ENCODE measurements at regions of chr19 and their contacts with region 1.

Region 1: DNA sequence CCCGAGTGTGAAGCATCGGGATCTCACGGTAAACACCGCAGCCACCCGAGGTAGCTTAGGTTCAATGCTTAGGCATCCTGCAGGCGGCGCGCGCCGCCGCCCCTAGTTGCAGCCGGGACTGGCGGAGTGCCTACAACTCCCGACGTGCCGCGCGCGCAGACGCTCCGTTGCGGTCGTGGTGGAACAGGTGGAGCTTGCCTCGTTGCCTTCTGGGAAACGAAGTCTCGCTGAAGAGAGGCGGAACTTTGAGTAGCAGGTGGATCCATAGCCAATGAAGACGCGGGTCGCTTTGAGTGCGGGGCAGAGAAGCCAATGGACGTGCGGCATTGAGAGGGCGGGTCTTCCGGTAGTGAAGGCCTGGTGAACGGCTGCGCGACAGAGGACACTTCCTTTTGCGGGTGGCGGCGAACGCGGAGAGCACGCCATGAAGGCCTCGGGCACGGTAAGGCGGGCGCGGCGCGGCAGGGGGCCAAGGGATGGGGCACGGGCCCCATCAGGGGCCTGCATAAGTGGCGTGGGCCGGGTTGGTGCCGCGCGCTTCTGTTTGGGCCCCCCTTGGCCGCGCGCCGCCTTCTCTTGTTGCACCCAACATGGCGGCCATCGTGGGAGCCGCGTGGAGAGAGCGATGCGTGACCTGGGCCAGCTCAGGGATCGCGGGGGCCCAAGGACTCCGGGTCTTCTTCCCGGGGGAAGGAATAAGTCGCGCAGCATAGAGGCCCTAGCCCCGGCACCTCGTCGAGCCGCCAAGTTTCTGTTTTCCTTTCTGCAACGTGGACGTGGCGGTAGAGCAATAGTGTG is at the start of gene RPL18A:
- DNase-seq: peak; percentile 99
- ATAC-seq: peak; percentile 91
- H3K4me3 ChIP-seq: peak within 1 kb of the TSS; percentile 91 to 97 (median 96)
- H3K27ac ChIP-seq: peak within 1 kb of the TSS; percentile 82
- H3K4me1 ChIP-seq: peaks cover 18% of the 10 kb centered on the region
- H3K27me3 ChIP-seq: no peaks in the 10 kb centered on the region; a peak in 1 of 5 replicates
- CTCF ChIP-seq: peak; percentile 97
- EP300 ChIP-seq: peak in 1 of 2 experiments; percentile 4; a peak in 1 of 4 replicates
- POLR2A ChIP-seq: peak; percentile 97
- RAD21 ChIP-seq: peak; percentile 31; the same call in 1 of the 2 replicates
- total RNA-seq, gene RPL18A: 1,471 and 1,490 TPM in 2 replicates

Region 2: GRCh38 chr19:17605761-17606745 is 253.7 kb before region 1 on chr19:
- CTCF ChIA-PET with region 1: no interaction called
- POLR2A ChIA-PET with region 1: interaction called, 12 read pairs
- in situ Hi-C with region 1: no loop called
- intact Hi-C with region 1: no loop called
- DNase-seq: peak; percentile 80
- ATAC-seq: peak; percentile 88
- H3K4me3 ChIP-seq: peak overlapping the region; percentile 27 to 68 (median 59); a peak in 5 of 6 replicates
- H3K27ac ChIP-seq: peak overlapping the region; percentile 76
- H3K4me1 ChIP-seq: peaks cover 44% of the 10 kb centered on the region
- H3K27me3 ChIP-seq: peaks cover 3 to 28% of the 10 kb centered on the region in 2 experiments; a peak in 3 of 5 replicates
- CTCF ChIP-seq: peak; percentile 70
- EP300 ChIP-seq: no peak
- POLR2A ChIP-seq: peak; percentile 61 to 84
- RAD21 ChIP-seq: peak; percentile 87

Region 3: DNA sequence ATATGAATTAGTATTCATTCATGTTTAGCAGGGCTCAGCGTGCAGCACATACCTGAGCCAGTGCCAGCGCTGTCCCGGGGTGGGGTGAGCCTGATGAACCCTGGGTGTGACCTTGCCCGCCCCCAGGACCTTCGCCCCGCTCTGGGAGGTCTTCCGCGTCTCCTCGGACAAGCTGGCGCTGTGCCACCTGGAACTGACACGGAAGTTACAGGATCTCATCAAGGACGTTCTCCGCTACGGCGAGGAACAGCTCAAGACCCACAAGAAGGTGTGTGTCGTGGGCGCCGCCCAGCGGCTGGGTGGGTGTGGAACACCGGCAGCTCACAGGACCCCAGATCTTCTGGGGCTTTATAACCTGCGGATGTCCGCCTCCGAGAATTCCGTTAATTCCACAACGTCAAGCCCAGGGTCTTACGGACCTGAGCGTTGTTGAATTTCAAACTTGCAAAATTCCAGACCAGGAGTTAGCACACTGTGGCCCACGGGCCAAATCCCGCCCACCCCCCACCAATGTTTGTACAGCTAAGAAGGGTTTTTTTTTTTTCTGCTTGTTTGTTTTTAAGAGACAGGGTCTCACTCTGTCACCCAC is 93.1 kb before region 1 on chr19:
- CTCF ChIA-PET with region 1: no interaction called
- POLR2A ChIA-PET with region 1: interaction called, 18 read pairs
- in situ Hi-C with region 1: no loop called
- intact Hi-C with region 1: no loop called
- DNase-seq: peak; percentile 89
- ATAC-seq: peak; percentile 83
- H3K4me3 ChIP-seq: peak overlapping the region; percentile 8 to 63 (median 13); a peak in 3 of 6 replicates
- H3K27ac ChIP-seq: peak overlapping the region; percentile 58
- H3K4me1 ChIP-seq: peaks cover 28% of the 10 kb centered on the region
- H3K27me3 ChIP-seq: no peaks in the 10 kb centered on the region
- CTCF ChIP-seq: peak; percentile 98
- EP300 ChIP-seq: peak in 1 of 2 experiments; percentile 22; a peak in 1 of 4 replicates
- POLR2A ChIP-seq: no peak
- RAD21 ChIP-seq: peak; percentile 87

Region 4: DNA sequence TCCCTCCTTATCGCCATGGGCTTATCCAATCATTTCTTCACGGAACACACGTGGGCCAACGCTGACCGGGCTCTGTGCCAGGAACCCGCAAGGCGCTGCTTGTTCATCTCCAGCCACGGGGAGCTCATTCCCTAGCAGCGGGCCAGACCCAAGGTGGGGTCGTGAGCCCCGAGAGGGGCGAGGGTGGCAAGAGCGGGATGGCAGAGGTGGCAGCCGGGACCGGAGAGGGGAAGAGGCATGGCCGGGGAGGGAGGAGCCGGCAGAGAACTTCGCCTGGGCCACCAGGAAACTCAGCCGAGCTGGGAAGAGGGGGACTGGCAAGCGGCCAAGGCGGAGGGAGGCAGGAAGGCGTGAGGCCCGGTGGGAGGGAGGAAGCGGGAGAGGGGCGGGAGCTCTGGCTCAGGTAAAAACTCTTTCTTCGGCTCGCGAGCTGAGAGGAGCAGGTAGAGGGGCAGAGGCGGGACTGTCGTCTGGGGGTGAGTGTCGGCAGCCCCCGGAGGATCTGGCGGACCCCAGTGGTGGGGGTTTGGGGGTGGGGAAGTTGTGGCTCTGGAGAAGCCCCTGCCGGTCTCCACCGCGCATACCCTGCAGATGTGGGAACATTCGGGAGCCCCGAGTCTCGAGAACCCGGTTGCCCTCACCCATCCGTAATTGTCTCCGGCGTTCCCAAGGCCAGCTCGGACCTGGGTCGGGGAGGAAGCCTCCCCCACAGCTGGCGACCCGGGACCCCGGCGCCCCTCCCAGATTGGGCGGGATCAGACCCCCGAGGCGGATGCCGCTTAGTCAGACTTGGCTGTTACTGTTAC is 64.8 kb before region 1 on chr19 and contains the start of gene B3GNT3:
- CTCF ChIA-PET with region 1: no interaction called
- POLR2A ChIA-PET with region 1: interaction called, 24 read pairs
- in situ Hi-C with region 1: no loop called
- intact Hi-C with region 1: loop called (anchors 1 kb)
- DNase-seq: peak; percentile 46
- ATAC-seq: peak; percentile 17
- H3K4me3 ChIP-seq: peak within 1 kb of the TSS; percentile 64 to 79 (median 66)
- H3K27ac ChIP-seq: no peak within 1 kb of the TSS
- H3K4me1 ChIP-seq: peaks cover 55% of the 10 kb centered on the region
- H3K27me3 ChIP-seq: peaks cover 0 to 15% of the 10 kb centered on the region in 2 experiments; a peak in 1 of 5 replicates
- CTCF ChIP-seq: no peak
- EP300 ChIP-seq: no peak
- POLR2A ChIP-seq: no peak; a peak in 1 of 4 replicates
- RAD21 ChIP-seq: no peak
- total RNA-seq, gene B3GNT3: 0.48 and 0.86 TPM in 2 replicates

Region 5: DNA sequence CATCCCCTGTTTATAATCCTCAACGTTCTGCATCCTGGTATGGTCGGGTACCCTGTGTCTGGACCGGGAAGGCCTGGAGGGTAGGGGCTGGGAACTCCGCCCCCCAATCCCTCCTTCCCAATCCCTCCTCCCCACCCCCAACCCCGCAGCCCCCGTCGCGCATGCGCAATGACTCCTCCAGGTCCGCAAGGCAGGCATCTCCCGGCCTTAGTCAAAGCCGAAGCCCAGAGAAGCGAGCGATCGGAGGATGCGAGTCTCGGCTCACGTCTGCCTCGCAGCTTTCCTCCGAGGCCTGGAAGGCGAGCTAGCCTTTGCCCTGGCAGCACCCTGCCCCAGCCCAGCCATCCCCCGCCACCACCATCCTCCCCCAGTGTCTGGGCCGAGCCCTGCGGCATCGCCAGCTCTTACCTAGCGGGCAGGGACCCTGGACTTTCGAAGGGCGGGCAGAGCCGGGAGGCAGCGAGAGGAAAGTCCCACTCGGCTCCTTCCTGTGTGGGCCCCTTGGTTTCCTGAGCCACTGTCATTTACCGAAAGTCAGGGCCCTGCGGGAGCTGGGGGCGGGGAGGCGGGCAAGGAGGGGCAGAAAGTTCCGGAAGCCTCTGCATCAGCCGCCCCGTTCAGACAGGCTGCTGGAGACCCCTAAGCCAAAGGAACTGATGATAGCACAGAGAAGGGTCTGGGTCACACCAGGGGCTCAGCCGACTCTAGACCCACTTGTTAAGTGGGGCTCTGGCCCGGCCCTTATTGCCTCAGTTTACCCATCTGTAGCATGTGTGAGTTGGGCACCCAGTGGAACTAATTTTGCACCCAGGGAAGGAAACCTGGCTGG is 12.0 kb before region 1 on chr19 and contains the start of gene JAK3:
- CTCF ChIA-PET with region 1: no interaction called
- POLR2A ChIA-PET with region 1: interaction called, 49 read pairs
- in situ Hi-C with region 1: no loop called
- intact Hi-C with region 1: no loop called
- DNase-seq: peak; percentile 59
- ATAC-seq: peak; percentile 83
- H3K4me3 ChIP-seq: peak within 1 kb of the TSS; percentile 50 to 64 (median 60)
- H3K27ac ChIP-seq: peak within 1 kb of the TSS; percentile 67
- H3K4me1 ChIP-seq: peaks cover 43% of the 10 kb centered on the region
- H3K27me3 ChIP-seq: no peaks in the 10 kb centered on the region; a peak in 1 of 5 replicates
- CTCF ChIP-seq: peak; percentile 16; the same call in 1 of the 2 replicates
- EP300 ChIP-seq: 0 out of 4 replicates have a peak, but pooled peaks of 1 of the 2 experiments have one; percentile 48
- POLR2A ChIP-seq: peak; percentile 22 to 79; a peak in 3 of 4 replicates
- RAD21 ChIP-seq: no peak
- total RNA-seq, gene JAK3: 2.8 and 3.4 TPM in 2 replicates

Region 6: DNA sequence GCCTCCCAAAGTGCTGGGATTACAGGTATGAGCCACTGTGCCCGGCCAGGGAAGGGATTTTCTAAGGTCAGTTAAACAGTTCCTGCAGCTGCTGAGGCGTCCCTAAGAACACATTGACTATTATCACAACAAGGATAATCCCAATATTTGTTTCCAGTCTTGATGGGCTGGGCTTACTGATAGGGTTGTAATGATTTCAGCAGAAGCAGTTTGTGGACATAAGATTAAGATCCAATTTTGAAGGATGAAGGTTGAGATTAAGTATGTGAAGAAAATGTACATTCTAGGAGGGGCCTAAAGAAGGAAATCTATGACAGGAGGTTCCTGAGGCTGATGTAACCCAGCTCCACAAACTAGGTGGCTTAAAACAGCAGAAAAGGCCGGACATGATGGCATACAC is 62.4 kb after region 1 on chr19:
- CTCF ChIA-PET with region 1: no interaction called
- POLR2A ChIA-PET with region 1: no interaction called
- in situ Hi-C with region 1: no loop called
- intact Hi-C with region 1: no loop called
- DNase-seq: no peak
- ATAC-seq: no peak
- H3K4me3 ChIP-seq: no peak overlapping the region
- H3K27ac ChIP-seq: no peak overlapping the region
- H3K4me1 ChIP-seq: no peaks in the 10 kb centered on the region
- H3K27me3 ChIP-seq: no peaks in the 10 kb centered on the region
- CTCF ChIP-seq: no peak
- EP300 ChIP-seq: no peak
- POLR2A ChIP-seq: no peak
- RAD21 ChIP-seq: no peak

Region 7: GRCh38 chr19:17932485-17933338 is 73.0 kb after region 1 on chr19 and contains the start of gene CCDC124:
- CTCF ChIA-PET with region 1: interaction called, 7 read pairs
- POLR2A ChIA-PET with region 1: interaction called, 43 read pairs
- in situ Hi-C with region 1: no loop called
- intact Hi-C with region 1: loop called (anchors 5 kb)
- DNase-seq: peak; percentile 80
- ATAC-seq: peak; percentile 93
- H3K4me3 ChIP-seq: peak within 1 kb of the TSS; percentile 91 to 97 (median 94)
- H3K27ac ChIP-seq: peak within 1 kb of the TSS; percentile 80
- H3K4me1 ChIP-seq: peaks cover 33% of the 10 kb centered on the region
- H3K27me3 ChIP-seq: peaks cover 0 to 4% of the 10 kb centered on the region in 2 experiments; a peak in 1 of 5 replicates
- CTCF ChIP-seq: peak; percentile 97
- EP300 ChIP-seq: no peak
- POLR2A ChIP-seq: peak; percentile 36 to 88; a peak in 3 of 4 replicates
- RAD21 ChIP-seq: peak; percentile 94
- total RNA-seq, gene CCDC124: 14.9 and 16.3 TPM in 2 replicates